Thyroid gland (tissue), 4 donors: ENCODE measurements at regions of chr11 and their contacts with region 1.

Region 1: DNA sequence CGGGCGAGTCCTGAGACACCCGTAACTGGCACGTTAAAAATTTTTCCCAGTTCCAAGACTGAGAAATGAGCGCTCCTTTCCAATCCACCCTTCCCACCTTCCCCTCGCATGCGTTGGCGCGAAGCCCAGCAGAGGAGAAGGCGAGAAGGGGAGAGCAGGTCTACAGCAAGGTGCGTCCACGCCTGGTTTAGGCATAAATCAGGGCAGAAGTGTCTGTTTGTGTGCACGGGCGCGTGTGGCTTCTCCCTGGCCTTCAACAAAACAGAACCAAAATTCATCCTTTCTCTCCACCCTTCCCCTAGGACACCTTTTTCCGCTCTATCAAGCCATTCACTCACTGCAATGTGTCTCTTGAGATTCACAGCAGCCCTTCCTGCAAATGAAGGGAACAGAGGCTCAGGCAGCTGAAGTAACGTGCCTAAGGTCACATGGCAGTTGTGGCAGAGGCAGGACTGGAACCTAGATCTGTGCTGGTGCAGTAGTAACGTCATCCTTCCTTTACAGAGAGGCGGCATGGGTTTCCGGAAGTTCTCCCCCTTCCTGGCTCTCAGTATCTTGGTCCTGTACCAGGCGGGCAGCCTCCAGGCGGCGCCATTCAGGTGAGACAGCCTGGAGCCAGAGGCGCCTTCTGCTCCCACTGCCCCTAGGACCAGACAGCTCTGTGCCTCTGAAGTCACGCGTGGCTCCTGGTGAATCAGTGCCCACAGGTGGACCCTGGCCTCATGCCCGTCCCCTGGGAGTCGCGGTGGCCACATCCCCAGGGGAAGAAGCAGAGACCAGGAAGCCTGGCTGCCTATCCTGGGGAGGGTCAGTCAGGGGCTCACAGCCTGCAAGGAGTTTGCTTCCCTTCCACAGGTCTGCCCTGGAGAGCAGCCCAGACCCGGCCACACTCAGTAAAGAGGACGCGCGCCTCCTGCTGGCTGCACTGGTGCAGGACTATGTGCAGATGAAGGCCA is 1.1 kb downstream of the CALCB start:
- DNase-seq: peak; percentile 90 to 95
- H3K4me3 ChIP-seq: no peak overlapping the region
- H3K27ac ChIP-seq: no peak overlapping the region
- H3K4me1 ChIP-seq: peaks cover 11 to 18% of the 10 kb centered on the region in 2 donors
- H3K27me3 ChIP-seq: peaks cover 4% of the 10 kb centered on the region
- CTCF ChIP-seq: peak; percentile 24 to 86 (median 75)
- POLR2A ChIP-seq: no peak

Region 2: GRCh38 chr11:14861680-14862079 is 212.8 kb before region 1 on chr11:
- intact Hi-C with region 1: no loop called
- DNase-seq: no peak
- H3K4me3 ChIP-seq: no peak overlapping the region
- H3K27ac ChIP-seq: no peak overlapping the region
- H3K4me1 ChIP-seq: no peaks in the 10 kb centered on the region
- H3K27me3 ChIP-seq: no peaks in the 10 kb centered on the region
- CTCF ChIP-seq: no peak
- POLR2A ChIP-seq: no peak

Region 3: DNA sequence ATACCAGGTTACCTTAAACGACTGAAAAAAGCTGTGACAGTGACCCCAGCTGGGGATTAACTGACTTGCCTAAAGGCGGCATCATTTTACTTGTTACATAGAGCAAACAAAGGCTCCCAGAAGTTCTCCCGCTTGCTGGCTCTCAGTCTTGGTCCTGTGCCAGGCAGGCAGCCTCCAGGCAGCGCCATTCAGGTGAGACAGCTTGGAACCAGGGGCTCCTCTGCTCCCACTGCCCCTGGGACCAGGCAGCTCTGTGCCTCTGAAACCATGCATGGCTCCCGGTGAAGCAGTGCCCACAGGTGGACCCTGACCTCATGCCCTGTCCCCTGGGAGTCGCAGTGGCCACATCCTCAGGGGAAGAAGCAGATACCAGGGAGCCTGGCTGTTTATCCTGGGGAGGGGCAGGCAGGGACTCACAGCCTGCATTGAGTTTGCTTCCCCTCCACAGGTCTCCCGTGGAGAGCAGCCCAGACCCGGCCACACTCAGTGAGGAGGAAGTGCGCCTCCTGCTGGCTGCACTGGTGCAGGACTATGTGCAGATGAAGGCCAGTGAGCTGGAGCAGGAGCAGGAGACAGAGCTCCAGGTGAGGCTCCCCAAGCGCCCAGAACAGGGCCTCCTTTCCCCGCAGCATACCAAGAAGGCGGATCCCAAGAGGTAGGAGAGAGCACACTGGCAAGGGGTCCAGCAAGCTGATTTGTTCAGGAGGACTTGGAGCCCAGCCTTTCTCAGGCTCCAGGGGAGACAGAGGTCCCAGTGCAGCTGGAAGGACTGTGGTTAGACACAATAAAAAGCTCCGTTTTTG is 166.9 kb before region 1 on chr11:
- intact Hi-C with region 1: loop called (anchors 5 kb)
- DNase-seq: peak; percentile 72 to 76
- H3K4me3 ChIP-seq: no peak overlapping the region
- H3K27ac ChIP-seq: no peak overlapping the region
- H3K4me1 ChIP-seq: peaks cover 6 to 23% of the 10 kb centered on the region in 2 donors
- H3K27me3 ChIP-seq: no peaks in the 10 kb centered on the region
- CTCF ChIP-seq: peak in 5 of 6 experiments; percentile 17 to 72 (median 44)
- POLR2A ChIP-seq: no peak

Region 4: DNA sequence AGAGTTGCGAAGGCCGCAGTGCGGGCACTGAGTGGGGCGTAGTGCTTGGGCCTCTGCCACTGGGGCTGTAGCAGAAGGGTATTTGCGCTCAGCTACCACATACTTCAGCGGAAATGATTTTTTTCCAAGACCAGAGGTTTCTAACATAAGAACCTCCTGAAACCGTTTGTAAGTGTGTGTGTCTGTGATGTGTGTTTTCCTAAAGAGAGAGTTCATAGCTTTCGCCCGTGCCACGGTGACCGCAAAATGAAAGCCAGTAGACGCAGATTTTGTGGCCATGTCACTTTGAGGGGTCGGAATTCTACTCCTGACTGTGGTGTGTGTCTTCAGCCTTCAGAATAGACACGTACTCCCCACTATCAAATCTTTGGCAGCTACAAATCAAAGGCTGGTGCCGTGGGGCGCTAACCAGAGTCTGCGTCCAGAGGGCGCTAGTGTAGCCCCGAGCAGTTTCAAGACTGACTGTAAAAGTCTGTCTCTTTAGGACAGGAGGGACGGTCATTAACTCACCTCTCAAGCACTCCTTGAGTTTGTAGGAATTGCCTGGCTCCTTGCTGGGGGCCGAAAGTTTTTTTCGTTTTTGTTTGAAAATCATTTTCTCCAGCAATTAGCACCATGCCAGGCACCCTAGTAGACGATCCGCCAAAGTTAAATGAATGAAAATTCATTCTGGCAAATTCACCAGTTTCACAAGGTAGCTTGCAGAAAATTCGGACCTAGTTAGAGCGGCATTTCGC is 99.8 kb before region 1 on chr11:
- intact Hi-C with region 1: loop called (anchors 10 kb)
- DNase-seq: peak; percentile 39 to 41
- H3K4me3 ChIP-seq: no peak overlapping the region
- H3K27ac ChIP-seq: no peak overlapping the region
- H3K4me1 ChIP-seq: peaks cover 9 to 27% of the 10 kb centered on the region in 2 donors
- H3K27me3 ChIP-seq: peaks cover 24% of the 10 kb centered on the region
- CTCF ChIP-seq: peak in 4 of 6 experiments; percentile 23 to 55 (median 36)
- POLR2A ChIP-seq: no peak

Region 5: DNA sequence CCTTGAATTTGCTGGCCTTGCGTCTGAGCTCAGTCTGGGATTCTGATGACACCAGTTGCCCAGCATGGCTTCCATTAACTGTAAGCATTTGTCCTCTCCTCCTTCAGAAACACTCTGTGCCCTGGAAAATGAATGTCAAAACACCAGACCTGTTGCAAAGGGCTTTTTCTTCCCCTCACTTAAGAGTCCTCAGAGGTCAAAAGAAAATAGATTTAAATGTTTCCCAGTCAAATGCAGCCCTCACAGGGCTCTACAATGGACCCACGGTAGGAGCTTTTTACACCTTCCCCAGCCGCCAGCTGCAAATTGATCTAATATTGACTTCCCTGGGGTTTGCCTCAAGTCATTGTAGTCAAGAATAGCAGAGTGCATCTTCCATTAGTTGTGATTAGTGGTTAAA is 372.4 kb after region 1 on chr11:
- intact Hi-C with region 1: no loop called
- DNase-seq: no peak
- H3K4me3 ChIP-seq: no peak overlapping the region
- H3K27ac ChIP-seq: no peak overlapping the region
- H3K4me1 ChIP-seq: no peaks in the 10 kb centered on the region
- H3K27me3 ChIP-seq: no peaks in the 10 kb centered on the region
- CTCF ChIP-seq: no peak
- POLR2A ChIP-seq: no peak